ENCODE measurements at regions of chr17 and their contacts with region 1.

Region 1: GRCh38 chr17:28982131-28982951 is 23.5 kb downstream of the SEZ6 start:
- DNase-seq: no peak
- H3K4me3 Mint-ChIP-seq: no peak overlapping the region
- H3K27ac Mint-ChIP-seq: no peak overlapping the region
- H3K4me1 Mint-ChIP-seq: no peaks in the 10 kb centered on the region
- H3K27me3 Mint-ChIP-seq: no peaks in the 10 kb centered on the region
- CTCF ChIP-seq: no peak

Region 2: DNA sequence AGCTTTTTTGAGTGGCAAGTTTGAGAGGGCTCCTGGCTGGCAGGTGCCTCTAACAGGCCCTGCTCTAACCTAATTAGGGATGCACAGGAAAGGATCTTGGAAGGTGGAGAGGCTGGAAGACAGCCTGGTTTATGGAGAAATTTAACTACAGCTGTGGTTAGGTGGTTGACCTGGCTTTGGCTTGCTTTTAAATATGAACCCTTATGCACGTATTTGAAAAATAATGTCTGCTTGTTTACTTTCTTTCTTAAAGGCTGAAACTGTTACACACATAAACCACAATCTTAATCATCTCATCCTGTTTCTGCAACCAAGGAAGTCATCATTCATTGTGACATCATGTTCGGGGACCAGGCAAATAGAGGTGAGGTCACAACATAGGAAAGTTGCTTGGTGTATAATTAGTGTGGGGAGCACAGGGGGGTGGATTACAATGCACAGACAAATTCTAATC is 56.4 kb before region 1 on chr17:
- CTCF ChIA-PET with region 1: no interaction called
- POLR2A ChIA-PET with region 1: no interaction called
- intact Hi-C with region 1: no loop called
- DNase-seq: peak; percentile 88
- H3K4me3 Mint-ChIP-seq: no peak overlapping the region
- H3K27ac Mint-ChIP-seq: peak overlapping the region; percentile 62
- H3K4me1 Mint-ChIP-seq: peaks cover 20% of the 10 kb centered on the region
- H3K27me3 Mint-ChIP-seq: no peaks in the 10 kb centered on the region
- CTCF ChIP-seq: no peak

Region 3: DNA sequence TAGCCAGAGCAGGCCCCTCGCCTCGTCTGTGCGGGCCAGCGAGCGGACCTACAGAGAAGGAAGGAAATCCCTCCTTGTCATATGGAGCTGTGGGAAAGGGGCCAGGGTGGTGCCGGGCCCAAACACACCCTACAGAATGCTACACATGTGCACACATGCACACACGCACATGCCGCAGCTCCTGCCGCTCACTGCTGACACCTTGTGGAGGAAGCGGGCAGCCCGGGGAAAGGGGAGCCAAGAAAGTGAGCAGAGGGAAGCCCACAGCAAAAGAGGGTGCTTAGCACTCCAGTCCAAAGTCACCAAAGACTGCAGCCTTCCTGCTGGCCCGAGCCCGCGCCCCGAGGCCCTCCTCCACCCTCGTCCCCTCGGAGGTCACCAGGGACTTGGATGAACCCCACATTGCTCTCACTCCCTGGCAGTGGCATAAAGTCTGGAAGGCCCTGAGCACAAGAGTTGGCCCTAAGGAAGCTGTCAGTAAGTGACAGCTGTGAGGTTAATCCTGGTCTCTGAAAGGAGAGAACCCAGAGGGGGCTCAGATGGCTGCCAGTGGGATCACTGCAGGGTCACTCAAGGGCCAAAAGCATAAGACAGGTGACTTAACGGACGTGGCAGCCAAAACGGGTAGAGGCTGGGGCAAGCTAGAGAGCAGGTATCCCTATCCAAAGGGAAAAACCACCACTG is 129.6 kb after region 1 on chr17:
- CTCF ChIA-PET with region 1: interaction called, 12 read pairs
- POLR2A ChIA-PET with region 1: no interaction called
- intact Hi-C with region 1: no loop called
- DNase-seq: peak; percentile 78
- H3K4me3 Mint-ChIP-seq: no peak overlapping the region
- H3K27ac Mint-ChIP-seq: no peak overlapping the region
- H3K4me1 Mint-ChIP-seq: peaks cover 10% of the 10 kb centered on the region
- H3K27me3 Mint-ChIP-seq: no peaks in the 10 kb centered on the region
- CTCF ChIP-seq: peak; percentile 89